GM12878 (cell line): ENCODE measurements at regions of chr12 and their contacts with region 1.

Region 1: DNA sequence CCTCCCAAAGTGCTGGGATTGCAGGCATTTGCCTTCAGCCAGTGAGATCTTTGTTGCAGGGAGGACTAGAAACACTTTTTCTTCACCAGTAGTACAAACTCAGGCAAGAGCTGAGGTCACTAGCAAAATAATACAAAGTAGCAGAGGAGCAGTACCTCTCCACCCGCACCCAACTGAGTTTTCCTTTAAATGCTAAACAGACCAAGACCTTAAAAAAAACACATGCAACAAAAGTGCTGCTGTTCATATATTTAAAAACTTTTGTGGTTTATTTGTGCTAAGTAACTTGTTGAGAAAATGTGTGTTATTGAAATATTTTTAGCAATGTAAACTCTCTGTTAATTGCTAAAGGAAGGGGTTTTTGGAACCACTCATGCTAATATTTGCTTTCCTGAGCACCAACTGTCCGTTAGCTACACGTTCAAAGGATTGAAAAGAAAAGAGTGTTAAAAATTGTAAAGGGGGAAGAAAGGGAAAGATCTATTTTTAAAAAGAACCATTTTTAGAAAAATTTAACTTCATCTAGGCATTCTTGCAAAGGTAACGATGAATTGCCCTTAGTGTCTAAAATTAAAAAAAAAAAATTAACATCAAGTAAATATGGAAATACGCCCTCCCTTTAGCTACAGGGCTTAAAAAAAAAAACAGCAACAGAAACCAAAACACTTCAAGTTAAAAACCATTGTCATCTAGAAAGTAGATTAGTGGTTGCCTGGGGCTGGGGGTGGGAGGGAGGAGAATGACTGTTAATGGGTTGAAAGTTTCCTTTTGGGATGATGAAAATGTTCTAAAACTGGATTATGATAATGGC is 114.0 kb upstream of the KRAS start:
- DNase-seq: no peak
- ATAC-seq: peak; percentile 91
- H3K4me3 ChIP-seq: peak overlapping the region; percentile 61
- H3K27ac ChIP-seq: peak overlapping the region; percentile 28
- H3K4me1 ChIP-seq: peaks cover 8% of the 10 kb centered on the region
- H3K27me3 ChIP-seq: no peaks in the 10 kb centered on the region; a peak in 1 of 4 replicates
- CTCF ChIP-seq: no peak
- EP300 ChIP-seq: peak in 1 of 2 experiments; percentile 34; a peak in 2 of 4 replicates
- POLR2A ChIP-seq: no peak
- RAD21 ChIP-seq: no peak

Region 2: GRCh38 chr12:25162866-25163265 is 201.9 kb before region 1 on chr12:
- CTCF ChIA-PET with region 1: no interaction called
- POLR2A ChIA-PET with region 1: no interaction called
- RAD21 ChIA-PET with region 1: no interaction called
- SMC1A ChIA-PET with region 1: no interaction called
- in situ Hi-C with region 1: no loop called
- intact Hi-C with region 1: no loop called
- DNase-seq: no peak
- ATAC-seq: no peak
- H3K4me3 ChIP-seq: no peak overlapping the region
- H3K27ac ChIP-seq: no peak overlapping the region
- H3K4me1 ChIP-seq: no peaks in the 10 kb centered on the region
- H3K27me3 ChIP-seq: no peaks in the 10 kb centered on the region; a peak in 1 of 4 replicates
- CTCF ChIP-seq: no peak
- EP300 ChIP-seq: no peak
- POLR2A ChIP-seq: no peak
- RAD21 ChIP-seq: no peak

Region 3: GRCh38 chr12:25241167-25242020 is 123.3 kb before region 1 on chr12:
- CTCF ChIA-PET with region 1: interaction called, 18 read pairs
- POLR2A ChIA-PET with region 1: no interaction called
- RAD21 ChIA-PET with region 1: interaction called, 9 read pairs
- SMC1A ChIA-PET with region 1: interaction called, 40 read pairs
- in situ Hi-C with region 1: no loop called
- intact Hi-C with region 1: no loop called
- DNase-seq: no peak
- ATAC-seq: peak; percentile 81
- H3K4me3 ChIP-seq: no peak overlapping the region
- H3K27ac ChIP-seq: no peak overlapping the region
- H3K4me1 ChIP-seq: no peaks in the 10 kb centered on the region
- H3K27me3 ChIP-seq: no peaks in the 10 kb centered on the region
- CTCF ChIP-seq: peak; percentile 55 to 63 (median 56); a peak in 5 of 6 replicates
- EP300 ChIP-seq: no peak
- POLR2A ChIP-seq: no peak
- RAD21 ChIP-seq: peak; percentile 69

Region 4: DNA sequence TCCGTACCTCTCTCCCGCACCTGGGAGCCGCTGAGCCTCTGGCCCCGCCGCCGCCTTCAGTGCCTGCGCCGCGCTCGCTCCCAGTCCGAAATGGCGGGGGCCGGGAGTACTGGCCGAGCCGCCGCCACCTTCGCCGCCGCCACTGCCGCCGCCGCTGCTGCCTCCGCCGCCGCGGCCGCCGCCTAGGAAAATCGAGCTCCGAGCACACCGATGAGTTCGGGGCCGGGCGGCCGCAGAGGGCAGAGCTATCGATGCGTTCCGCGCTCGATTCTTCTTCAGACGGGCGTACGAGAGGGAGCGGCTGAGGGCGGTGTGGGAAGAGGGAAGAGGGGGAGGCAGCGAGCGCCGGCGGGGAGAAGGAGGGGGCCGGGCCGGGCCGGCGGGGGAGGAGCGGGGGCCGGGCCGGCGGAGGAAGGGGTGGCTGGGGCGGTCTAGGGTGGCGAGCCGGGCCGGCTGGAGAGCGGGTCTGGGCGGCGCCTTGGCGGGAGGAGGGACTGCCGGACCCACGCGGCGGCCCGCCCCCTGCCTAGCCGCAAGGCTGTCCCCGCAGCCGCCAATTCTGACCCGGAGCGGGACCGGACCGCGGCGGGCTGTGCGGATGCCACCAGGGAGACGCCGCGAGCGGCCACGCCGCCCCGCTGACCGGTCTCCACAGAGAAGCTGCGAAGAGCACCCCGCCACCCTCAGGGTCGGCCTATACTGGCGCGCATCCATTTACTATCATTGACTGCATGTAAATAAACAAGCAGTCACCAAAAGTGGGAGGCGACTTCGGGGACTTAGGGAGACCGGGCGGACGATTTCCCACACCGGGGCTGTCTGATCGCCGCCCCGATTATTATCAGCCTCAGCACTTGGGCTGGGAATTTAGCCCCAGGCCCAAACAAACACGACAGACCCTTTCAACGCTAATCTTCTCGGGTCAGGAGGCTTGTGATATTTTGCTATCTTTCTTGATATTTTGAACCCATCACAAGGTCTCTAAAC is 113.7 kb before region 1 on chr12 and contains the start of gene KRAS:
- CTCF ChIA-PET with region 1: interaction called, 4 read pairs
- POLR2A ChIA-PET with region 1: interaction called, 5 read pairs
- RAD21 ChIA-PET with region 1: interaction called, 10 read pairs
- SMC1A ChIA-PET with region 1: interaction called, 4 read pairs
- in situ Hi-C with region 1: no loop called
- intact Hi-C with region 1: no loop called
- DNase-seq: peak; percentile 69
- ATAC-seq: peak; percentile 92
- H3K4me3 ChIP-seq: peak within 1 kb of the TSS; percentile 98
- H3K27ac ChIP-seq: peak within 1 kb of the TSS; percentile 70
- H3K4me1 ChIP-seq: peaks cover 10% of the 10 kb centered on the region
- H3K27me3 ChIP-seq: no peaks in the 10 kb centered on the region
- CTCF ChIP-seq: no peak
- EP300 ChIP-seq: no peak
- POLR2A ChIP-seq: peak; percentile 84
- RAD21 ChIP-seq: no peak
- polyA plus RNA-seq, gene KRAS: 3.1 to 6.1 TPM

Region 5: GRCh38 chr12:25295361-25295760 is 69.4 kb before region 1 on chr12:
- CTCF ChIA-PET with region 1: interaction called, 3 read pairs
- POLR2A ChIA-PET with region 1: no interaction called
- RAD21 ChIA-PET with region 1: interaction called, 8 read pairs
- SMC1A ChIA-PET with region 1: interaction called, 10 read pairs
- in situ Hi-C with region 1: no loop called
- intact Hi-C with region 1: no loop called
- DNase-seq: no peak
- ATAC-seq: no peak
- H3K4me3 ChIP-seq: no peak overlapping the region
- H3K27ac ChIP-seq: no peak overlapping the region
- H3K4me1 ChIP-seq: peaks cover 5% of the 10 kb centered on the region; the same call in 1 of the 2 replicates
- H3K27me3 ChIP-seq: no peaks in the 10 kb centered on the region
- CTCF ChIP-seq: no peak
- EP300 ChIP-seq: no peak
- POLR2A ChIP-seq: no peak
- RAD21 ChIP-seq: no peak

Region 6: GRCh38 chr12:25311506-25311905 is 53.2 kb before region 1 on chr12:
- CTCF ChIA-PET with region 1: no interaction called
- POLR2A ChIA-PET with region 1: no interaction called
- RAD21 ChIA-PET with region 1: no interaction called
- SMC1A ChIA-PET with region 1: no interaction called
- in situ Hi-C with region 1: no loop called
- intact Hi-C with region 1: no loop called
- DNase-seq: no peak
- ATAC-seq: no peak
- H3K4me3 ChIP-seq: no peak overlapping the region
- H3K27ac ChIP-seq: no peak overlapping the region
- H3K4me1 ChIP-seq: no peaks in the 10 kb centered on the region
- H3K27me3 ChIP-seq: no peaks in the 10 kb centered on the region
- CTCF ChIP-seq: no peak
- EP300 ChIP-seq: no peak
- POLR2A ChIP-seq: no peak
- RAD21 ChIP-seq: no peak

Region 7: DNA sequence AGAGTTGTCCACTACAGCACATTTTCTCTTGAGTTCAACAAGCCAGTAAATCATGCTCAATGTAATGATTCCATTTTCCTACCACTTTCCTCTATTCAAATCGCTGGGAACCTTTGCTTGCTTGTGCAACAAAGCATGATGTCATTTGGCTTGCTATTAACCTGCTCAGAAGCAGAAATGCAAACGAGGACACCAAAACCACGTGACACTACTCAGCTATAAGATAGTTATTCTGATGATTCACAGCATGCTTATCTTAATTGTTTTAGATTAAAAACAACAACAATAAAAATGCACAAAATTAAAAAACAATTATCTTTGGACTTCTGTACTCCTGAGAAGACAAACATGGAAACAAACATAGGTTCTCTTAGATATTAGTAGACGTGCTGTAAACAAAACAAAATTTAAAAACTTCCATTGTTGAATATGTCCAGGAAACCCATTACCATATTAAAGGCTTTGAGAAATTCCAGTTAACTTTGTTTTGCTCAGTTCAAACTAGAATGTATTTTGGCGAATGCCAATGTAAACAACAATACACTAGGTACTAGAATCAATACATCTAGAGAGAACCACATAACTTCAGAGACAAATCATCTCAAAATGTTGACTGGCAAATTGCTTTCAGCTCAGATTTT is 36.5 kb before region 1 on chr12:
- CTCF ChIA-PET with region 1: interaction called, 3 read pairs
- POLR2A ChIA-PET with region 1: interaction called, 3 read pairs
- RAD21 ChIA-PET with region 1: interaction called, 18 read pairs
- SMC1A ChIA-PET with region 1: interaction called, 26 read pairs
- in situ Hi-C with region 1: no loop called
- intact Hi-C with region 1: no loop called
- DNase-seq: no peak
- ATAC-seq: 0 out of 3 replicates have a peak, but pooled peaks have one; percentile 20
- H3K4me3 ChIP-seq: no peak overlapping the region
- H3K27ac ChIP-seq: no peak overlapping the region
- H3K4me1 ChIP-seq: peaks cover 28% of the 10 kb centered on the region
- H3K27me3 ChIP-seq: no peaks in the 10 kb centered on the region
- CTCF ChIP-seq: no peak
- EP300 ChIP-seq: no peak
- POLR2A ChIP-seq: no peak
- RAD21 ChIP-seq: no peak

Region 8: GRCh38 chr12:25377469-25378177 is 12.9 kb after region 1 on chr12:
- CTCF ChIA-PET with region 1: interaction called, 4 read pairs
- POLR2A ChIA-PET with region 1: interaction called, 13 read pairs
- RAD21 ChIA-PET with region 1: interaction called, 23 read pairs
- SMC1A ChIA-PET with region 1: interaction called, 64 read pairs
- in situ Hi-C with region 1: no loop called
- intact Hi-C with region 1: no loop called
- DNase-seq: no peak
- ATAC-seq: peak; percentile 74
- H3K4me3 ChIP-seq: no peak overlapping the region
- H3K27ac ChIP-seq: no peak overlapping the region
- H3K4me1 ChIP-seq: 0 out of 2 replicates have a peak, but pooled peaks cover 1% of the 10 kb centered on the region
- H3K27me3 ChIP-seq: no peaks in the 10 kb centered on the region
- CTCF ChIP-seq: no peak
- EP300 ChIP-seq: no peak
- POLR2A ChIP-seq: no peak
- RAD21 ChIP-seq: no peak

Region 9: DNA sequence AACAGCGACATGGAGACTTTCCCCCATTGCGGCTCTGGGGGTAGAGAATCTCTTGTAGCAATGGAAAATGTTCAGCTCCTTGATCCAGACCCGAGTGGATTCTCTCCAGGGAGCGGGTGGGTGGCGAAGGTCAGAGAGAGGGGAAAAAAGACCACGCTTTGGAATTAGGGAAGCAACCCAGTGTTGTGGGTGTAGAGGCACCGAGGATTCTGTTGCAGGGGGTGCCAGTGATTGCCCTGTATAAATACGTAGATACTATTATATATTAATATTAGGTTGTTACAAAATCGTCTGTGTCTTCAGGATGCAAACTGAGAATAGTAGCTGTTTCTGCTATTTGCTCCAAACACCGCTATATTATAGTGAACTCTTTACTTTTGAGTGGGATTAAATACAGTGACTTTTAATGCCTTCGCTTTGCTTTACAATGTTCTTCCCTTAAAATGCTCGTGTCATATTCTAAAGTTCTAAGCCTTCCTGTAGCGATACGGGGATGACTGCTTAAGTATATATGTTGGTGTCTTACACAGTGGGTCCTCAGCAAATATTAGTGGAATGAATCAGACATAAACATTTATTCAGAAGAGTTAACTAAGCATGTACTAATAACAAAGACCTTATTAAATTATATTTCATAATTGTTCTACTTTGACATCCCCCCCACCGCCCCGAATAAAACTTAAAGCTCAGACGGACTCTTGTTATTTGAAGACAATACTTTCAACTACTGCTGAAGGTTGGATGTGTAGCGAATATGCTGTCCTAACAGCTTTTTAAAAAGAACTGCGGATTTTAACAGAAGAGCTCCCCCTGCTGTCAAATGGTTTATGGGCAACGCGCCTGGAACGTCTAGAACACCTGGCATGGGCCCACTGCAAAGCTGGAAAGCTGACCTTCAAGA is 22.3 kb after region 1 on chr12:
- CTCF ChIA-PET with region 1: interaction called, 3 read pairs
- POLR2A ChIA-PET with region 1: no interaction called
- RAD21 ChIA-PET with region 1: interaction called, 23 read pairs
- SMC1A ChIA-PET with region 1: interaction called, 5 read pairs
- in situ Hi-C with region 1: no loop called
- intact Hi-C with region 1: no loop called
- DNase-seq: no peak
- ATAC-seq: peak; percentile 65
- H3K4me3 ChIP-seq: peak overlapping the region; percentile 99; the same call in 1 of the 2 replicates
- H3K27ac ChIP-seq: peak overlapping the region; percentile 95
- H3K4me1 ChIP-seq: peaks cover 21% of the 10 kb centered on the region
- H3K27me3 ChIP-seq: no peaks in the 10 kb centered on the region
- CTCF ChIP-seq: peak; percentile 76 to 92 (median 78)
- EP300 ChIP-seq: no peak
- POLR2A ChIP-seq: no peak
- RAD21 ChIP-seq: peak; percentile 96

Region 10: DNA sequence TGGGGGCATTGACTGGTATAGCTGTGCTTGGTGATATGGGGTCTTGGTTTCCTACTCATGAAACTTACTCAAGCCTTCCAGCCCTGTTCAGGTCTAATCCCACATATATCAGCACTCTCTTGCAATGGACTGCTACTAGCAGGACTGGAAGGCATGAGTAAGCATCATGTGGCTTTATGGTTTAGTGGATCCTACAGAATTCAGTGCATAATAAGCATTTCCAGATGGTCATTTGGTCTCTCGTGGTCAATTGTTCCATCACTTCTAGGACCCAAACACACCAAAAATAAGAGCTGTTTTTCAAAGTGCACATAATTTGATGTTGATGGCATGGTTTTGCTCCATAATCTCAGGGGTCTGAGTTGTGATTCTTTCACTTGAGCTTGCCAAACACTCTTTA is 73.9 kb after region 1 on chr12:
- CTCF ChIA-PET with region 1: no interaction called
- POLR2A ChIA-PET with region 1: no interaction called
- RAD21 ChIA-PET with region 1: no interaction called
- SMC1A ChIA-PET with region 1: no interaction called
- in situ Hi-C with region 1: no loop called
- intact Hi-C with region 1: no loop called
- DNase-seq: no peak
- ATAC-seq: no peak
- H3K4me3 ChIP-seq: no peak overlapping the region
- H3K27ac ChIP-seq: no peak overlapping the region
- H3K4me1 ChIP-seq: no peaks in the 10 kb centered on the region
- H3K27me3 ChIP-seq: no peaks in the 10 kb centered on the region
- CTCF ChIP-seq: no peak
- EP300 ChIP-seq: no peak
- POLR2A ChIP-seq: no peak
- RAD21 ChIP-seq: no peak